G401 (cell line): ENCODE measurements at regions of chr22 and their contacts with region 1.

Region 1: GRCh38 chr22:39490135-39490798 is 11.8 kb upstream of the MIEF1 start:
- DNase-seq: peak; percentile 96

Region 2: GRCh38 chr22:39388261-39389011 is 101.8 kb before region 1 on chr22:
- in situ Hi-C with region 1: loop called (anchors 25 kb)
- DNase-seq: peak; percentile 98